ENCODE measurements at regions of chr15 and their contacts with region 1.

Region 1: DNA sequence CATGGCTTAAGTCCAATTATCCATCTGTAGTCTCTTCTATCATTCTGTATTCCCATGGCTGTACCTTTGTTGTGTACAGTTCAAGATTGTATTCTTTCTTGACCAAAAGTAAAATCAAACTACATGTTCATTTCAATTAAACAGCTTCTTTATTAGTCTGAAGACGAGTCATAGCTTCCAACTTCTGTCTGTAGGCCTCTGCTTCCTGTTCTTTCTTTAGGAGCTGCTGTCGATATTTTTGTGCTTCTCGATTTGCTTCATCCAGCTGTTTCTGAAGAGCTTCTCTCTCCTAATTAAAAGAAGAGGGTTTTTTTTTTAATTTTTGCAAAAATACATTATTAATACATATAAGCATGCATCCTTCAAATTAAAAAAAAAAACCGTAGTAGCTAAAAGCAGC is 13.0 kb upstream of the HDC start:
- DNase-seq: no peak
- H3K4me3 Mint-ChIP-seq: no peak overlapping the region
- H3K27ac Mint-ChIP-seq: peak overlapping the region; percentile 50
- H3K4me1 Mint-ChIP-seq: peaks cover 38% of the 10 kb centered on the region
- H3K27me3 Mint-ChIP-seq: no peaks in the 10 kb centered on the region

Region 2: DNA sequence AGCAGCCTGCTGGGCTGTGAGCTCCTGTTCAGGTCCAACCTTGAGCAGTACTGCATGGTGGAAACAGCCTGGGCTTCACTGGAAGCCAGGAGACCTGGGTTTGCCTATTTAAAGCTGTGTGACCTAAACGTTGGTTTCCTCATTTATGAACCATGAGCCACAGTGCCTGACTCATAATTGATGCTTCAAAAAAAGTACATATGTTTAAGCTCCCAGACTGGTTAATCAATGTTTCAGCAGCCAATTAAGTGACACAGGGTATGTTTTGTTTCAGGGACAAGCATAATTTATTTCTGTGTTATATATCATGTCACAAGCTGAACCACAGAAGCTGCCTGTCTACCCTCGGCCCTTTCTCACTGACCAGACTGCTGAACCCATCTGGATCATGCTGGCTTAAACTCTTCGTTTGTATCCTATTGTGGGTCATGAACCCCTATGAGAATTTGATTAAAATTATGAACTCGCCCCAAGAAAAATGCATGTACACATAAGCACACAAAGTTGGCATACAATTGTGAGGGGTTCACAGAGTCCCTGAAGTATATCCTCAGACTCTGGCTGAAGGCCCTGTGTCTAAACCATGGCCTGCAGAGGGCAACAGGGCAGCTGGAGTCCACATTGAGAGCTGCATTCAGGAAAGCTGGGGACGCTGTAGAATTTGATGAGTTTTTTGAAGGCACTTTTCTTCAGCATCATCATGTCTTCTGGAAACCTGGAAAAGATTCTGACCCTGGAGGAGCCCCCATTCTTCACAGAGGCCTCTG is 36.6 kb before region 1 on chr15:
- CTCF ChIA-PET with region 1: interaction called, 3 read pairs
- POLR2A ChIA-PET with region 1: no interaction called
- intact Hi-C with region 1: loop called (anchors 5 kb)
- DNase-seq: peak; percentile 41
- H3K4me3 Mint-ChIP-seq: no peak overlapping the region
- H3K27ac Mint-ChIP-seq: peak overlapping the region; percentile 53
- H3K4me1 Mint-ChIP-seq: peaks cover 22% of the 10 kb centered on the region
- H3K27me3 Mint-ChIP-seq: no peaks in the 10 kb centered on the region

Region 3: GRCh38 chr15:50256188-50257041 is 22.1 kb before region 1 on chr15:
- CTCF ChIA-PET with region 1: no interaction called
- POLR2A ChIA-PET with region 1: no interaction called
- intact Hi-C with region 1: no loop called
- DNase-seq: no peak
- H3K4me3 Mint-ChIP-seq: no peak overlapping the region
- H3K27ac Mint-ChIP-seq: no peak overlapping the region
- H3K4me1 Mint-ChIP-seq: peaks cover 37% of the 10 kb centered on the region
- H3K27me3 Mint-ChIP-seq: no peaks in the 10 kb centered on the region